ENCODE measurements at regions of chr1 and their contacts with region 1.

Region 1: GRCh38 chr1:47333922-47334764 is 553 bp downstream of the CMPK1 start:
- DNase-seq: peak; percentile 61 to 98 (median 77)

Region 2: GRCh38 chr1:47313915-47314664 is 20.1 kb before region 1 on chr1 and contains the start of gene STIL:
- intact Hi-C with region 1: loop called (anchors 1 kb)
- DNase-seq: peak; percentile 97 to 100 (median 99)

Region 3: DNA sequence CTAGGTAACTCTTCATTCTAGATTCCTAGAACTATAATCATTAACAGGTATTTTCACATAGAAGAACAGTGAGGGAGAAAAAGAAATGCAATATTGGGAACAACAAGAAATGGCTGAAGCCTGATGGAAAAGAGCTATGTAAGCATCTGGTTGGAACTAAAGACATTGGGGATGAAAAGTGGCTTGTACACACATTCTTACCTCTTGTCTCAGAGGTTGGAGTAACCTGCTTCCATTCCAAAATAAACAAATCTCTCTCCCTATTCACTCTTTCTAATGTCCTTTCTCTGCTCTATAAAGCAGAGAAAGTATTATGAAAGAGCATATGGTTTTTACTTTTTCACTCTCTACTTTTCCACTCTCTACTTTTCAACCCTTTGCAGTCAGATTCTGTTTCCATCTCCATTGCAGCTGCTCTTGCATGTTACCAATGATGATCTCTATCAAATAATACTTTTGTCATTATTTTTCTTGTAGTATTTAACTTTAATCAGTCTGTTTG is 36.9 kb after region 1 on chr1:
- intact Hi-C with region 1: no loop called
- DNase-seq: no peak

Region 4: DNA sequence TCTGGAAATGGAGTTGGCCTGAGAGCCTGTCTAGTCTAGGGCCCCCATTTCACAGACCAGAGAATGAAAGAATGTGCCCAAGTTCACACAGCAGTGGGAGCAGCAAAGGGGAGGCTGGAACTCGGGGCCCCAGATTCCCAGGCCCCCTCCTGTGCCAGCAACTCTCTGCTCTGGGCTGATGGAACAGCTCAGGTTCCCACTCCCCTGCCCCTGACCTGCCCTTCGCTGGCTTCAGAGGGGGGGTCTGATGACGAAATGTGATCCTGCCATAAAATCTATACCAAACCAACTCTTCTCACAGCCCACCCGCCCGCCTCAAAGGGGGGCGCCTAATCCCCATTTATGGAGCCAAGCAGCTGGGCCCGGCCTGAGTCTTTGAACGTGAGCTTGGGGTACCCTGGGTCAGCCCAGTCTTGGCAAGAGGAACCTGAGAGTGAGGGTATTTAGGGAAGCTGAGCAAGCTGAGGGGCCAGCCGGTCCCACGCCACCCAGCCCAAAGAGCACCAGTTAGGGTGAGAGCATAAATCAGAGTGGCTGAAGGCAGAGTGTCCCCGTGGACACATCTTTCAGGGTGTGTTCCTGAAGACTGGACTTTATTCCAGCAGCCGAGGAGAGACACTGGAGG is 168.7 kb after region 1 on chr1:
- intact Hi-C with region 1: no loop called
- DNase-seq: peak in 2 of 10 donors; percentile 37 to 58